H1 (cell line): ENCODE measurements at regions of chr11 and their contacts with region 1.

Region 1: GRCh38 chr11:34565417-34566207 is 52.0 kb upstream of the ELF5 start:
- DNase-seq: peak in 1 of 2 experiments; percentile 17
- H3K4me3 ChIP-seq: no peak overlapping the region
- H3K27ac ChIP-seq: no peak overlapping the region
- H3K4me1 ChIP-seq: 0 out of 7 replicates have a peak, but pooled peaks cover 0 to 2% (median 0%) of the 10 kb centered on the region in 4 experiments
- H3K27me3 ChIP-seq: no peaks in the 10 kb centered on the region
- CTCF ChIP-seq: peak; percentile 60 to 89 (median 77)
- EP300 ChIP-seq: no peak
- POLR2A ChIP-seq: no peak
- RAD21 ChIP-seq: peak; percentile 86 to 90

Region 2: GRCh38 chr11:34546511-34547222 is 18.9 kb before region 1 on chr11:
- CTCF ChIA-PET with region 1: interaction called, 39 read pairs
- POLR2A ChIA-PET with region 1: no interaction called
- DNase-seq: no peak
- H3K4me3 ChIP-seq: no peak overlapping the region
- H3K27ac ChIP-seq: no peak overlapping the region
- H3K4me1 ChIP-seq: no peaks in the 10 kb centered on the region
- H3K27me3 ChIP-seq: no peaks in the 10 kb centered on the region
- CTCF ChIP-seq: no peak
- EP300 ChIP-seq: no peak
- POLR2A ChIP-seq: no peak
- RAD21 ChIP-seq: no peak

Region 3: GRCh38 chr11:34552270-34552669 is 13.3 kb before region 1 on chr11:
- CTCF ChIA-PET with region 1: interaction called, 39 read pairs
- POLR2A ChIA-PET with region 1: no interaction called
- DNase-seq: no peak
- H3K4me3 ChIP-seq: no peak overlapping the region
- H3K27ac ChIP-seq: no peak overlapping the region
- H3K4me1 ChIP-seq: no peaks in the 10 kb centered on the region
- H3K27me3 ChIP-seq: no peaks in the 10 kb centered on the region
- CTCF ChIP-seq: no peak
- EP300 ChIP-seq: no peak
- POLR2A ChIP-seq: no peak
- RAD21 ChIP-seq: no peak

Region 4: DNA sequence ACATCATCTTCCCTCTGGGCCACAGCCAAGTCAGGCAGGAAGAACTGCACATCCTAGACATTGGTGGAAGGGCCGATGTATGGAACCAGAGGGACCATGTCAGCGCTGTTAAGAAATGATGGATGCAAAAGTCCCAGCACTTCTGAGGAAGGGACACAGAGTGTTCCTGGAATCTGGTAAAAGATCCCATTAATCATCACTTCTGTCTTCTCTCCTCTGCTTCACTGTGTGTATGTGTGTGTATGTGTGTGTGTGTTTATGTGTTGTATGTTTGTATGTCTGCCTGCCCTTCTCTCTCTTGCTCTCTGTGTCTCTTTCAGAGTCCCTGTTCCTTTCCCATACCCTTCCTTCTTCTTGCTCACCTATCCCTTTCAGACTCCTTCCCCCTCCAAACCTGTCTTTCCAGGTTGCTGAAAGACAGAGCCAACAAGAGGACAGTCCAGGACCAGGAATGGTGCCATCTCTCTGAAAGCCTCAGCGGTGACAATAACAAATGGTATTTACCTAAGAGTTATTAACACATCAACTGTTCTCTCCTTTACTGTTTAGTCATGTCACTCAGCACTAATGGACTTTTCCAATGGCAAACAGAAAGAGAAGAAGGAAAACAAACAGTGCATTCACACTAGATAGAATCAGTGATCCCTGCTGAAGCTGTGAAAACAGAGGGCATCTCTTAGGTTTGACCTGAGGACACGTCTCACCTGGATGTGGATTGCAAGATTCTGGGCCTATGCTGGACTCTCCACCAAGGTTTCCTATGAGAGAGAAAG is 102.4 kb after region 1 on chr11:
- CTCF ChIA-PET with region 1: no interaction called
- POLR2A ChIA-PET with region 1: no interaction called
- DNase-seq: no peak
- H3K4me3 ChIP-seq: no peak overlapping the region
- H3K27ac ChIP-seq: no peak overlapping the region; the same call in 1 of the 2 replicates
- H3K4me1 ChIP-seq: peaks cover 0 to 3% (median 0%) of the 10 kb centered on the region in 4 experiments; a peak in 2 of 7 replicates
- H3K27me3 ChIP-seq: no peaks in the 10 kb centered on the region
- CTCF ChIP-seq: no peak
- EP300 ChIP-seq: no peak
- POLR2A ChIP-seq: no peak
- RAD21 ChIP-seq: no peak

Region 5: DNA sequence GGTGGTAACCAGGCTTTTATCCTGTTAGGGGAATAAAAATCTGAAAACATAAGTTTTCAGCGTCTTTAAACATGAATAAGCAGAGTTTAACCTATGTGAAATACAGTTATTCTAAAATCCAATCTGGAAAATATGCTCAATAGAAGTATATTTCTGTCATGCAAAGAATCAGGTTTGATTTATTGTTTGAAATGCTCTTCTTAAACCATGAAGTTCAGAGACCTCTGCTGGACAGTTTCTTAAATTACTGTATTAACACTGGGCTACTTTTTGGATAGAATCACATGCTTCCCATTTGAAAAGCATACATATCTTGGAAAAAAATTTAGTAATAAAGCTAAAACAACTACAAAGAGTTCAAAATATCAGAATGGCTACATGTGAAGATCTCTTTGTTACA is 325.2 kb after region 1 on chr11:
- CTCF ChIA-PET with region 1: interaction called, 33 read pairs
- POLR2A ChIA-PET with region 1: no interaction called
- DNase-seq: no peak
- H3K4me3 ChIP-seq: no peak overlapping the region
- H3K27ac ChIP-seq: no peak overlapping the region
- H3K4me1 ChIP-seq: no peaks in the 10 kb centered on the region
- H3K27me3 ChIP-seq: no peaks in the 10 kb centered on the region
- CTCF ChIP-seq: peak in 1 of 3 experiments; percentile 29; a peak in 2 of 4 replicates
- EP300 ChIP-seq: no peak
- POLR2A ChIP-seq: no peak
- RAD21 ChIP-seq: peak; percentile 44 to 54

Region 6: GRCh38 chr11:34899633-34900016 is 334.0 kb after region 1 on chr11:
- CTCF ChIA-PET with region 1: interaction called, 33 read pairs
- POLR2A ChIA-PET with region 1: no interaction called
- DNase-seq: no peak
- H3K4me3 ChIP-seq: no peak overlapping the region
- H3K27ac ChIP-seq: no peak overlapping the region
- H3K4me1 ChIP-seq: no peaks in the 10 kb centered on the region
- H3K27me3 ChIP-seq: no peaks in the 10 kb centered on the region
- CTCF ChIP-seq: no peak
- EP300 ChIP-seq: no peak
- POLR2A ChIP-seq: no peak
- RAD21 ChIP-seq: no peak